Activated T-helper 1 cell treated with anti-CD3 and anti-CD28 coated beads, Interleukin-12 subunit alpha, Interleukin-12 subunit beta, Interleukin-2, Interleukin-4 antibody, amounts not matched to agents 30 ng/mL and 10 ng/mL and 1 ng/mL, durations not matched to agents 14 hours and 24 hours and 36 hours (primary cell): ENCODE measurements at regions of chr11 and their contacts with region 1.

Region 1: GRCh38 chr11:114846416-114846791 is 168.1 kb downstream of the NXPE2 start:
- DNase-seq: no peak
- H3K4me3 Mint-ChIP-seq: no peak overlapping the region
- H3K27ac Mint-ChIP-seq: no peak overlapping the region
- H3K4me1 Mint-ChIP-seq: peaks cover 6% of the 10 kb centered on the region
- H3K27me3 Mint-ChIP-seq: no peaks in the 10 kb centered on the region

Region 2: GRCh38 chr11:114832532-114833125 is 13.8 kb before region 1 on chr11:
- intact Hi-C with region 1: loop called (anchors 1 kb)
- DNase-seq: no peak
- H3K4me3 Mint-ChIP-seq: no peak overlapping the region
- H3K27ac Mint-ChIP-seq: no peak overlapping the region
- H3K4me1 Mint-ChIP-seq: no peaks in the 10 kb centered on the region
- H3K27me3 Mint-ChIP-seq: no peaks in the 10 kb centered on the region

Region 3: GRCh38 chr11:114864896-114865295 is 18.5 kb after region 1 on chr11:
- intact Hi-C with region 1: no loop called
- DNase-seq: no peak
- H3K4me3 Mint-ChIP-seq: no peak overlapping the region
- H3K27ac Mint-ChIP-seq: no peak overlapping the region
- H3K4me1 Mint-ChIP-seq: no peaks in the 10 kb centered on the region
- H3K27me3 Mint-ChIP-seq: no peaks in the 10 kb centered on the region

Region 4: DNA sequence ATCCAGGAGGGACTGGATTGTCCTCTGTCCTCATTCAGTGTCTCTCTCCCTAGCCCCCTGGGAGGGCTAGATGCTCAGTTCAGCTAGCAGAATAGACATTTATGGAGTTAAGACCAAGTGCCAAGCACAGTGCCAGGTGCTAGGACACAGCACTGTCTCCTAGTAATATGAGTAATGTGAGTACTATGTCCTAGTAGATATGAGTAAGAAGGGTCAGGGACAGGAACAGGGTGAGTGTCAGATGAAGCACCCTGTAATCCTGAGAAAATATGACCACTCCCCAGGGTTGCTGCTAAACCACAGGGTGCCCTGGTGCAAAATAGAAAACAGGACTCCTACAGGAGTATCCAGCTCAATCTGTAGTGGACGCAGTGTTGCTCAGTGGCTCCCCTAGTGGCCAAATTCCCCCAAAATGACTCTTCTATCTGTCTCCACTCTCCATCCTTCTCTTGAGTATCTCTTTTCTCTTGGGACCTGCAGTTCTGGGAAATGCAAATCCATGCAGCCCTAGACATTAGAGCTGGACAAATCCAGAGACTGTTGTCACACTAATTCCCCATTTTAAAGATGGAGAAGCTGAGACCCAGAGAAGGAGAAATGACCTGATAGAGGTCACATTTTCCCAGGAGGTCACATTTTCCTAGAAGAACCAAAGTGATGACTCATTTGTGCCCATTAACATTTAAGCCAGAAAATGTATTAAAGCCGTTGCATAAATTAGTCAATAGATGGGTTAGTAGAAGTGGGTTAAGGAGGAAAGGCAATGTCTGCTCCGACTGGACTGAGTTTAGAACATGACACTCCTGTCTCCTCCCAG is 46.2 kb after region 1 on chr11:
- intact Hi-C with region 1: no loop called
- DNase-seq: no peak
- H3K4me3 Mint-ChIP-seq: no peak overlapping the region
- H3K27ac Mint-ChIP-seq: no peak overlapping the region
- H3K4me1 Mint-ChIP-seq: no peaks in the 10 kb centered on the region
- H3K27me3 Mint-ChIP-seq: no peaks in the 10 kb centered on the region

Region 5: DNA sequence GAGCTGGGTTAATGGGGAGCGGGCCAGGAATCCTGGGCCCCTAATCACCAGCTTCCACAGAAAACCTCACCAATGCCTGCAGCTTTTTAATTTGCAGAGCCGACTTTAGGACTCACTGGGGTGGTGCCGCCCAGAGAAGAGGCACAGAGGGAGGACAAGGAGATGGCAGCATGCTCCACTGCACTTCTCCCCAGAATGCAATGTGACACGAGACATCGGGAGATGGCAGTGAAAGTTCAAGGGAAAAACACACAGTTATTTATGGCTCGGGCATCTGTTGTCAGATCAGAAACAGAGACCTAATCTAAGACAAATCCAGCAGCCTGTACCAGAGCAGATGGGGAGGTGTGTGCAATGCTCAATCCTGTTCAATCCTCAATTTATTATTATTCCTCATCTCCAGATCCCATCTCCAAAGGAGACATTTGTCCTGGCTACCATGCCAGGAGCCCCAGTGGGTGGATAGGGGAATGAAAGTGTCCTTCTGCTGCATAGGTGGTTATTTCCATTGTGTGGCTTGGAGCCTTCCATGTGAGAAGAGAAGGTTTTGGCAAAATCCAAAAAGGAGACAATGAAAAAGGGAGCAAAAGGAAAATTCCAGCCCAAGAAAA is 82.0 kb after region 1 on chr11:
- intact Hi-C with region 1: no loop called
- DNase-seq: no peak
- H3K4me3 Mint-ChIP-seq: no peak overlapping the region
- H3K27ac Mint-ChIP-seq: no peak overlapping the region
- H3K4me1 Mint-ChIP-seq: no peaks in the 10 kb centered on the region
- H3K27me3 Mint-ChIP-seq: no peaks in the 10 kb centered on the region